GM12878 (cell line): ENCODE measurements at regions of chr3 and their contacts with region 1.

Region 1: DNA sequence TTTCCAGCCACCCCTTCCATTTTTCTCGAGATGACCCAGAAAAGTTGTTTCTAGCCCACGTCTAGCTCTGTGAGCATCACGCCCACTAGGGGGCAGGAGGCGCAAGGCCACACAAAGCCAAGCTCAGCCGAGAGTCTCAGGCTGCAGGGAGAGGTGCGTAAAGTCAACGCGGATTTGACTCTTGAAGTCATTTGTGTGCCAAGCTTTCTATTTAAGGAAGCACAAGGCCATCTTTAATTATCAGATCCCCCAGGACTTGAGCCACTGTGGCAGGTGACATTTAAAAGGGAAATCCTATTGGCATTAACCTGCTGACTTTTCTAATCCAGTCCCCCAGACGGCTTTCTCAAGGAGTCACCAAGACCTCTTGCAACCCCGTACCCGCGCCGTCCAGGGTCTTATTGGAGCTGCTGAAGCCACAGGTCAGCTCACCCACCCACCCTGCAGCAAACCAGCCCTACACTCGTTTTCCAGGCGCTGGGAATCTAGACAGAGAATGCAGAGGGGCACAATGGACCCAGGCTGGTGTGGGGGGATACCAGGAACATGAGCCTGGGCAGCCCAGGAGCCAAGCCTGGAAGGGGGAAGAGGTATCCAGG is 62.1 kb downstream of the CAPN7 start:
- DNase-seq: no peak
- ATAC-seq: peak; percentile 80
- H3K4me3 ChIP-seq: no peak overlapping the region
- H3K27ac ChIP-seq: no peak overlapping the region
- H3K4me1 ChIP-seq: peaks cover 39% of the 10 kb centered on the region
- H3K27me3 ChIP-seq: no peaks in the 10 kb centered on the region
- CTCF ChIP-seq: peak; percentile 95 to 99 (median 97); a peak in 5 of 6 replicates
- EP300 ChIP-seq: no peak
- POLR2A ChIP-seq: no peak
- RAD21 ChIP-seq: peak; percentile 100

Region 2: DNA sequence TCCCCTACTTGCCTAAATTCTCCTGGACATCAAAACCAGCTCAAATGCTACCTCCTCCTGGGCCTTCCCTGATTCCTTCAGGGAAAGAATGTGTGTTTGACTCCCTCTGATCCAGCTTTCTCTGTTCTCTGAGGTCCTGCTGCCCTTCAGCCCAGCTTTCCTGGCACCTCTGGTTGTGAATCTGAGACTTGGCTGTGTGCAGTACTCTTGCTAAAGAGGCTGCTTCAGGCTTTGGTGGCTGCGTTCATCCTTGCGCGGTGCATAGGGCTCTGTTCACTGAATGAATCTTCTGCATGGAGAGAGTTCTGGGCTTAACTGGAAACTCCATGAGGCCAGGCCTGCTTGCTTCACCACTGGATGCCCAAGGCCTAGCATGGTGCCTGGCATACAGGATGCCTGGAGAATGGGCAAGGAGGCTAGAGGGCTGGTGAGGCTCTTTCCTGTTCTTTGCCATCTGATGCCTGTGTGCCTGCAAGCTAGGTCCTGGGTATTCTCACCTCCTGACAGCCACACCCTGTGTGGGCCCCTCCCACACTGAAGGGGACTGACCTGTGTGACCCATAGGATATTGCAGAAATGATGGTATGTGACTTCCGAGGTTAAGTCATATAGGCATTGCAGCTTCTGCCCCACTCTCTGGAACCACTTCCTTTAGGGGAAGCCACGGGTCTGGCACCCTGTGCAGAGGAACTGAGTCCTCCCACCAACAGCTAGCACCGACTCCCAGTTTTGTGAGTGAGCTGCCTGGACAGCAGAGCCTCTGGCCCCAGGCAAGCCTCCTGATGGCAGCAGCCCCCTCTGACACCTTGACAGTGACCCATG is 890.6 kb before region 1 on chr3:
- CTCF ChIA-PET with region 1: no interaction called
- POLR2A ChIA-PET with region 1: no interaction called
- RAD21 ChIA-PET with region 1: no interaction called
- SMC1A ChIA-PET with region 1: no interaction called
- in situ Hi-C with region 1: no loop called
- intact Hi-C with region 1: no loop called
- DNase-seq: peak; percentile 25
- ATAC-seq: peak; percentile 81
- H3K4me3 ChIP-seq: no peak overlapping the region
- H3K27ac ChIP-seq: no peak overlapping the region
- H3K4me1 ChIP-seq: peaks cover 6% of the 10 kb centered on the region
- H3K27me3 ChIP-seq: no peaks in the 10 kb centered on the region
- CTCF ChIP-seq: no peak
- EP300 ChIP-seq: no peak
- POLR2A ChIP-seq: no peak
- RAD21 ChIP-seq: no peak

Region 3: DNA sequence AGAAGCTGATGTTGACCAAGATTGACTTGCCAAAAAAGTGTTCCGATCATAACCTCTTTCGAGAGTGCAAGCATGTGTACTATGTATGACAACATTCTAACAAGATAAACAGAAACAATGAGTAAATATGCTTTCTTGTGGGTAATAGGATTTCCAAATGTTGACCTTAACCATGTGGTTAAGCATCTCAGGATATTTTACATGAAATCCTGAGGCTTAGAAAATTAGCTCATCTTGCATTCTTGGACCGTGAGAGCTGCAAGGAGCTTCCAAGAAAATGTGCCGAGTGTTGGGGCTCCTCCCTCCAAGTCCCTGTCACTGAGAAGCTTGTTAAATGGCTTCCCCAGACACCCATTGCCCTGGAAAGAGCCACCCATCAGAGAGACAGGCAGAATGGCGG is 543.1 kb before region 1 on chr3:
- CTCF ChIA-PET with region 1: no interaction called
- POLR2A ChIA-PET with region 1: no interaction called
- RAD21 ChIA-PET with region 1: no interaction called
- SMC1A ChIA-PET with region 1: no interaction called
- in situ Hi-C with region 1: no loop called
- intact Hi-C with region 1: no loop called
- DNase-seq: no peak
- ATAC-seq: no peak
- H3K4me3 ChIP-seq: no peak overlapping the region
- H3K27ac ChIP-seq: no peak overlapping the region
- H3K4me1 ChIP-seq: peaks cover 13% of the 10 kb centered on the region
- H3K27me3 ChIP-seq: no peaks in the 10 kb centered on the region
- CTCF ChIP-seq: no peak
- EP300 ChIP-seq: no peak
- POLR2A ChIP-seq: no peak
- RAD21 ChIP-seq: no peak

Region 4: GRCh38 chr3:14879211-14879874 is 388.8 kb before region 1 on chr3:
- CTCF ChIA-PET with region 1: no interaction called
- POLR2A ChIA-PET with region 1: no interaction called
- RAD21 ChIA-PET with region 1: no interaction called
- SMC1A ChIA-PET with region 1: no interaction called
- in situ Hi-C with region 1: no loop called
- intact Hi-C with region 1: no loop called
- DNase-seq: no peak
- ATAC-seq: no peak
- H3K4me3 ChIP-seq: no peak overlapping the region
- H3K27ac ChIP-seq: no peak overlapping the region
- H3K4me1 ChIP-seq: no peaks in the 10 kb centered on the region
- H3K27me3 ChIP-seq: no peaks in the 10 kb centered on the region
- CTCF ChIP-seq: no peak
- EP300 ChIP-seq: no peak
- POLR2A ChIP-seq: no peak
- RAD21 ChIP-seq: no peak

Region 5: GRCh38 chr3:15205934-15206661 is 62.0 kb before region 1 on chr3 and contains the start of gene CAPN7:
- CTCF ChIA-PET with region 1: interaction called, 105 read pairs
- POLR2A ChIA-PET with region 1: no interaction called
- RAD21 ChIA-PET with region 1: interaction called, 27 read pairs
- SMC1A ChIA-PET with region 1: interaction called, 119 read pairs
- in situ Hi-C with region 1: no loop called
- intact Hi-C with region 1: no loop called
- DNase-seq: peak; percentile 67
- ATAC-seq: peak; percentile 94
- H3K4me3 ChIP-seq: peak within 1 kb of the TSS; percentile 94
- H3K27ac ChIP-seq: peak within 1 kb of the TSS; percentile 61
- H3K4me1 ChIP-seq: no peaks in the 10 kb centered on the region
- H3K27me3 ChIP-seq: no peaks in the 10 kb centered on the region
- CTCF ChIP-seq: peak; percentile 39 to 40 (median 39); a peak in 4 of 6 replicates
- EP300 ChIP-seq: no peak
- POLR2A ChIP-seq: peak; percentile 95
- RAD21 ChIP-seq: no peak
- polyA plus RNA-seq, gene CAPN7: 5.3 to 6.7 TPM

Region 6: GRCh38 chr3:15291589-15292541 is 23.7 kb after region 1 on chr3:
- CTCF ChIA-PET with region 1: interaction called, 14 read pairs
- POLR2A ChIA-PET with region 1: no interaction called
- RAD21 ChIA-PET with region 1: interaction called, 5 read pairs
- SMC1A ChIA-PET with region 1: interaction called, 6 read pairs
- in situ Hi-C with region 1: no loop called
- intact Hi-C with region 1: loop called (anchors 2 kb)
- DNase-seq: peak; percentile 89
- ATAC-seq: peak; percentile 95
- H3K4me3 ChIP-seq: peak overlapping the region; percentile 17; the same call in 1 of the 2 replicates
- H3K27ac ChIP-seq: peak overlapping the region; percentile 73
- H3K4me1 ChIP-seq: peaks cover 38% of the 10 kb centered on the region
- H3K27me3 ChIP-seq: no peaks in the 10 kb centered on the region
- CTCF ChIP-seq: no peak
- EP300 ChIP-seq: peak; percentile 61 to 64; a peak in 3 of 4 replicates
- POLR2A ChIP-seq: no peak
- RAD21 ChIP-seq: no peak

Region 7: DNA sequence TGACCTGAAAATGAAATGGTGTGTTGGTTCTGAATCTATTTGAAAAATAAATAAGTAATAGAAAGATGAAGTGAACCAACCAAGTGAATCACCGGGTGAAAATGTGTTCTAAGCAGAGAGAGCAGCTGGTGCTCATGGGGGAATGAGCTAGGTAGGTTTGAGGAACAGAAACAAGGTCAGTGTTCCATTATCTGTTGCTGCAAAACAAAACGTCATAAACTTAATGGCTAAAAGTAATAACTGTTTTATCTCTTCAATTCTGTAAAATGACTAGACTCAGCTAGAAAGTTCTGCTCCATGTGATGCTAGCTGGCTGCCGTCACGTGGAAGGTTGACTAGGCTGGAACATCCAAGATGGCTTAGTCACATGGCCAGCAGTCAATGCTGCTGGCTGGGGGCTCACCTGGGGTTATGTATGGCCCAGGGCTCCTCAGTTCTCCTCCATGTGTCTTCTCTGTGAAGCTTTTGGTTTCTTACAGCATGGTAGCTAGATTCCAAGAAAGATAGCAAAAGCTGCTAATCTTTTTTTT is 77.5 kb after region 1 on chr3:
- CTCF ChIA-PET with region 1: interaction called, 23 read pairs
- POLR2A ChIA-PET with region 1: interaction called, 3 read pairs
- RAD21 ChIA-PET with region 1: interaction called, 13 read pairs
- SMC1A ChIA-PET with region 1: interaction called, 7 read pairs
- in situ Hi-C with region 1: no loop called
- intact Hi-C with region 1: no loop called
- DNase-seq: peak; percentile 86
- ATAC-seq: peak; percentile 94
- H3K4me3 ChIP-seq: no peak overlapping the region
- H3K27ac ChIP-seq: peak overlapping the region; percentile 83
- H3K4me1 ChIP-seq: peaks cover 42% of the 10 kb centered on the region
- H3K27me3 ChIP-seq: no peaks in the 10 kb centered on the region
- CTCF ChIP-seq: no peak
- EP300 ChIP-seq: peak; percentile 85 to 88
- POLR2A ChIP-seq: peak; percentile 59
- RAD21 ChIP-seq: no peak

Region 8: DNA sequence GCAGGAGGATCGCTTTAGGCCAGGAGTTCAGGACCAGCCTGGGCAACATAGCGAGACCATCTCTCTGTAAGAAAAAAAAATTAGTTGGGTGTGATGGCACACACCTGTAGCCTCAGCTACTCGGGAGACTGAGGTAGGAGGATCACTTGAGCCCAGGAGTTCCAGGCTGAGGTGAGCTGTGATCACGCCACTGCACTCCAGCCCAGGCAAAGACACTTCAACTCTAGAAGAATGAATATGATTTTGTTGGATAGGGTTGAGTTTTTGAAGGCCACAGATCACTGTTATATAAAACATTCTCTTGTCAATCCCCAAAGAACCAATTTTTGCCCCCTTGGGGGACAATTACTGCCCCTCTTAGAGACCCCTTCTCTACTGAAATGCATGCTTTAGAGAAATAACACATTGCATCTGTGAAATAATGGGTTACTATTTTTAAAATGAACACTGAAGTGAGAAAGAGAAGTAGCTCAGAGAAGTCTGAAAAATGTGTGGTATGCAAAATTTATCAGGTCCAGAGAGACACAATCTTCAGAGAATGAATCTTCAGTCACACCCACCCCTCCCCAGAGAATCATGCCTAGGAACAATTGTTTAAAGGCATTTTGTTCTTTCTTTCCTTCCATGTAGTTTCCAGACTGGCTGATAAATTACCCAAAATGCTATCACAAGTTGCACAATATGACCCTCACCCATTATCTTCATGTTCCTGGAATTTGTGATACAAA is 116.5 kb after region 1 on chr3:
- CTCF ChIA-PET with region 1: interaction called, 228 read pairs
- POLR2A ChIA-PET with region 1: interaction called, 12 read pairs
- RAD21 ChIA-PET with region 1: interaction called, 137 read pairs
- SMC1A ChIA-PET with region 1: interaction called, 136 read pairs
- in situ Hi-C with region 1: loop called (anchors 5 kb)
- intact Hi-C with region 1: no loop called
- DNase-seq: peak; percentile 84
- ATAC-seq: peak; percentile 87
- H3K4me3 ChIP-seq: peak overlapping the region; percentile 48; the same call in 1 of the 2 replicates
- H3K27ac ChIP-seq: peak overlapping the region; percentile 93
- H3K4me1 ChIP-seq: peaks cover 66% of the 10 kb centered on the region
- H3K27me3 ChIP-seq: no peaks in the 10 kb centered on the region
- CTCF ChIP-seq: no peak
- EP300 ChIP-seq: peak; percentile 86 to 93
- POLR2A ChIP-seq: no peak
- RAD21 ChIP-seq: 0 out of 2 replicates have a peak, but pooled peaks have one; percentile 1

Region 9: GRCh38 chr3:15557511-15557946 is 289.4 kb after region 1 on chr3:
- CTCF ChIA-PET with region 1: interaction called, 73 read pairs
- POLR2A ChIA-PET with region 1: no interaction called
- RAD21 ChIA-PET with region 1: interaction called, 13 read pairs
- SMC1A ChIA-PET with region 1: interaction called, 22 read pairs
- in situ Hi-C with region 1: loop called (anchors 10 kb)
- intact Hi-C with region 1: loop called (anchors 2 kb)
- DNase-seq: peak; percentile 67
- ATAC-seq: peak; percentile 88
- H3K4me3 ChIP-seq: no peak overlapping the region
- H3K27ac ChIP-seq: no peak overlapping the region
- H3K4me1 ChIP-seq: peaks cover 13% of the 10 kb centered on the region
- H3K27me3 ChIP-seq: no peaks in the 10 kb centered on the region
- CTCF ChIP-seq: peak; percentile 37 to 64 (median 55); a peak in 4 of 6 replicates
- EP300 ChIP-seq: no peak
- POLR2A ChIP-seq: no peak
- RAD21 ChIP-seq: peak; percentile 52